Activated naive CD4-positive, alpha-beta T cell treated with anti-CD3 and anti-CD28 coated beads for 36 hours (primary cell): ENCODE measurements at regions of chr12 and their contacts with region 1.

Region 1: GRCh38 chr12:89566630-89567151 is 40.8 kb upstream of the POC1B start:
- DNase-seq: no peak
- H3K4me3 Mint-ChIP-seq: no peak overlapping the region
- H3K27ac Mint-ChIP-seq: no peak overlapping the region
- H3K4me1 Mint-ChIP-seq: peaks cover 3% of the 10 kb centered on the region
- H3K27me3 Mint-ChIP-seq: no peaks in the 10 kb centered on the region

Region 2: GRCh38 chr12:90515199-90516175 is 948.8 kb after region 1 on chr12:
- CTCF ChIA-PET with region 1: interaction called, 7 read pairs
- intact Hi-C with region 1: loop called (anchors 10 kb)
- DNase-seq: no peak
- H3K4me3 Mint-ChIP-seq: no peak overlapping the region
- H3K27ac Mint-ChIP-seq: no peak overlapping the region
- H3K4me1 Mint-ChIP-seq: peaks cover 4% of the 10 kb centered on the region
- H3K27me3 Mint-ChIP-seq: peaks cover 10% of the 10 kb centered on the region